ENCODE measurements at regions of chr2 and their contacts with region 1.

Region 1: DNA sequence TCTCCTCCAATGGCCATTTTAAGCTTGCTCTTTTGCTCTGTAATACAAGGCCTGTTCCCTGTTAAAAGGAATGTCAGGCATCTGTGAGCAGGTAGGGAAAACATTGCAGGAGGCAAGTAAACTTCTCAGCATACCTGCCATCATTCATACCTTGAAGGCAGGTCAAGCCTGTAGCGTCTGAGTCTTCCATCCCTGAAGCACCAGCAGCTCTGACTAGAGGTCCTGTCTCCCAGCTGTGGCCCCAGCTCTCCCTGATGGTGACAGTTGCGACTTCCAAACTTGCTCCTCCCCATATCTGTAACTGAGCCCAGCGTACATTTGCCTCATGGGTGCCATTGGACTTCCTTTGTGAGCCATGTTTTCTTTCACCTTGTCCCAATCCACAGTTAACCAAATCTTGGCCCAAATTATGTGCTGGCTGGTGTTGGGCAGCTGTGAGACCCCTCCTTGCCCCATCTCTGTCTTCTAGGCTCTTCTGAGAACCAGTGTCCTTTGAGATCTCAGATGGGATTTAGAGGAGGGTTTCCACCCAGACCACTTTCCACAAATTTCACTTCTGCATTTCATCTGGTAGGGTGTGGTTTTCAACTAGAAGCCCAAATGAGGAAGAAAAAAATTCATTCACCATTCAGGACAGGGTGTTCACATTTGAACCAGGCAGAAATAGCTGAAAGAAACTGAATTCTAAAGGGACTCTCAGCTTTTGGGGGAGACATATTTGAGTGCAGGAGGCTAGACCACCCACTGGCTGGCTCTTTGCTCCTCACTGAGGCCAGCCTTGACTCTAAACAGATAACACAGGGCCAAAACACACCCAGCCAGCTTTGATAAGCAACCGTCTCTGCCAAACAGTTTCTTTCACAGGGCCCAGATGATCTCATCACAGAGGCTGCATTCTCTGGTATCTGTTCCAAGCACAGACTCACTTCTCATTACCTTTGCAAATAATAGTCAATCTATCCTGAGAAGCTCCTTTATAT is 66.4 kb upstream of the MSH2 start:
- DNase-seq: no peak
- H3K4me3 ChIP-seq: no peak overlapping the region
- CTCF ChIP-seq: no peak

Region 2: DNA sequence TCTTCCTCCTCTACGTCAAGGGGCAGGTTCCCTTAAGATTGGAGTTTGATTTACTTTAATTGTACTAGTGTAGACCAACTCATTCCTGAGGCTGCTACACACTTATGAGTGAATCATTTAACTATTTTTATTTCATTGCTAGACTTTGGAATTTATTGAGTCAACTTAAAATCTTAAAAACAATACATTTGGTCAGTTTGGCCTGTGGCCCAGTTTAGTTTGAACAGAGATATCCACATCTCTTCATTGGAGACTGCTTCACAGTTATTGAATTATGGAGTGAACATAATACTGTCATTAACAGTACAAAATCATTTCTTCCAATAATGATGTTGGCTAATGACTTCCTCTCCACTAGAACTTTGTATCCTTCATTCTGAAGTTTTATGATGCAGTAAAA is 146.9 kb before region 1 on chr2:
- CTCF ChIA-PET with region 1: no interaction called
- POLR2A ChIA-PET with region 1: no interaction called
- DNase-seq: peak; percentile 72
- H3K4me3 ChIP-seq: no peak overlapping the region
- CTCF ChIP-seq: no peak

Region 3: GRCh38 chr2:47360927-47361326 is 24.4 kb after region 1 on chr2:
- CTCF ChIA-PET with region 1: interaction called, 17 read pairs
- POLR2A ChIA-PET with region 1: interaction called, 3 read pairs
- DNase-seq: peak; percentile 16
- H3K4me3 ChIP-seq: no peak overlapping the region
- CTCF ChIP-seq: no peak

Region 4: GRCh38 chr2:47373747-47374146 is 37.2 kb after region 1 on chr2:
- CTCF ChIA-PET with region 1: interaction called, 44 read pairs
- POLR2A ChIA-PET with region 1: no interaction called
- DNase-seq: no peak
- H3K4me3 ChIP-seq: no peak overlapping the region
- CTCF ChIP-seq: no peak

Region 5: GRCh38 chr2:47386551-47386950 is 50.0 kb after region 1 on chr2:
- CTCF ChIA-PET with region 1: interaction called, 293 read pairs
- POLR2A ChIA-PET with region 1: interaction called, 6 read pairs
- DNase-seq: no peak
- H3K4me3 ChIP-seq: no peak overlapping the region
- CTCF ChIP-seq: no peak

Region 6: GRCh38 chr2:47402805-47403608 is 66.5 kb after region 1 on chr2 and contains the start of gene MSH2:
- CTCF ChIA-PET with region 1: interaction called, 19 read pairs
- POLR2A ChIA-PET with region 1: no interaction called
- DNase-seq: peak; percentile 38
- H3K4me3 ChIP-seq: peak within 1 kb of the TSS; percentile 83
- CTCF ChIP-seq: no peak

Region 7: GRCh38 chr2:47437287-47437686 is 100.7 kb after region 1 on chr2:
- CTCF ChIA-PET with region 1: interaction called, 10 read pairs
- POLR2A ChIA-PET with region 1: no interaction called
- DNase-seq: no peak
- H3K4me3 ChIP-seq: no peak overlapping the region
- CTCF ChIP-seq: peak; percentile 11

Region 8: DNA sequence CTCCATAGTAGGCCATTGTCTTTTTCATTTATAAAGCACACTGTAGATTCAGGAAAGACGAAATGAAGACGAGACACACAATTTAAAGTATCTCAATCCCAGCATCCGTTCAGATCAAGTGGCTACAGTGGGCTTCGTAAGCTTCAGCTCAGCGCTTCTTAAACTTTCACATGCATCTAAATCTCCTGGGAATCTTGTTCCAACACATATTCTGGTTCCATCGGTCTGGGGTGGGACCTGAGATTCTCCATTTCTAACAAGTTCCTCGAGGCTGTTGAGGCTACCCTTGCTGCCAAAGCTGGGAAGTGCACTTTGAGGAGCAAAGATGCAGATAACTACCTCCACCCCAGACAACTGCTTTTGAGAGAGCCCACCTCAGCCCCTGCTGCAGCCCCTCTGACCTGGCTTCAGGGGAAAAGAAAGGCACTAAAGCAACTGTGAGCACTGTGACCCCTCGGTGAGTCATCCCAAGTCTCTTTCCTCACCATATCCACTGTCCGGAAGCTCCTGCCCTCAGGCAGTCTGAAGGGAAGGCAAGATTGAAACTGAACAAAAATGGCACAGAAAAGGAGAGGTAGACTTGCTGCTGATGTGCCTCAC is 770.9 kb after region 1 on chr2:
- CTCF ChIA-PET with region 1: interaction called, 12 read pairs
- POLR2A ChIA-PET with region 1: no interaction called
- DNase-seq: no peak
- H3K4me3 ChIP-seq: 0 out of 2 replicates have a peak overlapping the region, but pooled peaks have one; percentile 1
- CTCF ChIP-seq: peak; percentile 16